Gastrocnemius medialis (tissue), 4 donors: ENCODE measurements at regions of chr13 and their contacts with region 1.

Region 1: DNA sequence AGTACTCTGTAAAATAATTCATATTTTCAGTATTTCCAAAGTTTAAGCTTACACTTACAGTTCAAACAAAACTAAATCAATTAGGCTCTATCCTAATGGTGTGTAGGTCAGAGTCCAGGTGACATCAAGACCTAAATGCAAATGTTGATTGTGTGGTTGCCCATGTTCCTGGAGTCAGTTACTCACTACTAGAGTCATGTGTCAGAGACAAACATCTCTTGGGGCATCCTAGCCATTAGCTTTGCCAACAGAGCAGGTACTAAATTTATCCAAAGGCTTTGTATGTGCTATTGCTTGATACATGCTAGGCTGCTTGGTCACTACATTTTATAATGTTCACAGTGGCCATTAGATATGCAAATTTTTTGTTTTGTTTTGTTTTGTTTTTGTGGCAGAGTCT is 11.7 kb downstream of the SPRY2 start:
- DNase-seq: peak; percentile 16 to 27
- ATAC-seq: peak; percentile 93 to 95
- H3K4me3 ChIP-seq: no peak overlapping the region
- H3K27ac ChIP-seq: peak overlapping the region; percentile 45 to 63 (median 52)
- H3K4me1 ChIP-seq: peaks cover 13% of the 10 kb centered on the region in 2 donors
- H3K27me3 ChIP-seq: no peaks in the 10 kb centered on the region
- CTCF ChIP-seq: no peak
- POLR2A ChIP-seq: no peak

Region 2: DNA sequence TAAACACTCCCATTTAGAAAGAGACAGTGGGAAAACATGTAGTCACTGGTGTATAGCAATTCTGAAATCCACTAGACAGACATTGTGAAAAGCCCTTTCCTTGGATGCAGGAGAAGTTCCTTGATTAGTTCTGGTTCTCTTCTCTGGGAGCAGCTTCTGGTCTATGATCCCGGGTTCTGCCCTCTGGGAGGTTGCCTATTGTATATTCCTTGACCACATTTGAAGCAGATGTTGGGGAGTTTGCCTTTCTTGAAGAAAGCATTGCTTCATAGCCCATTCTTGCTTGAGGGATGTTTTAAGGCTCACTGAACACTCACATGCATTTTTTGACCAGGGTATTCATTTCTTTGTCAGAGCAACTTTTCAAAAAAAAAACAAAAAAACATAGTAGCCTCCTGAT is 636.4 kb before region 1 on chr13:
- in situ Hi-C with region 1: no loop called
- intact Hi-C with region 1: no loop called
- DNase-seq: no peak
- ATAC-seq: no peak
- H3K4me3 ChIP-seq: no peak overlapping the region
- H3K27ac ChIP-seq: no peak overlapping the region
- H3K4me1 ChIP-seq: no peaks in the 10 kb centered on the region
- H3K27me3 ChIP-seq: no peaks in the 10 kb centered on the region
- CTCF ChIP-seq: no peak
- POLR2A ChIP-seq: no peak

Region 3: GRCh38 chr13:79918620-79919019 is 410.6 kb before region 1 on chr13:
- in situ Hi-C with region 1: no loop called
- intact Hi-C with region 1: loop called (anchors 10 kb)
- DNase-seq: no peak
- ATAC-seq: no peak
- H3K4me3 ChIP-seq: no peak overlapping the region
- H3K27ac ChIP-seq: peak overlapping the region in 2 of 4 donors; percentile 50 to 53
- H3K4me1 ChIP-seq: peaks cover 34 to 38% of the 10 kb centered on the region in 2 donors
- H3K27me3 ChIP-seq: no peaks in the 10 kb centered on the region
- CTCF ChIP-seq: no peak
- POLR2A ChIP-seq: no peak